ENCODE measurements at regions of chr3 and their contacts with region 1.

Region 1: GRCh38 chr3:64685800-64686445 is 1.9 kb downstream of the ADAMTS9 start:
- DNase-seq: peak; percentile 73 to 97
- H3K4me3 ChIP-seq: peak overlapping the region; percentile 68 to 85
- H3K27ac ChIP-seq: peak overlapping the region; percentile 96 to 97
- H3K4me1 ChIP-seq: peaks cover 0 to 5% of the 10 kb centered on the region in 2 donors
- H3K27me3 ChIP-seq: no peaks in the 10 kb centered on the region
- CTCF ChIP-seq: peak; percentile 24 to 58 (median 35)

Region 2: GRCh38 chr3:64422192-64422591 is 263.7 kb before region 1 on chr3:
- intact Hi-C with region 1: no loop called
- DNase-seq: no peak
- H3K4me3 ChIP-seq: no peak overlapping the region
- H3K27ac ChIP-seq: no peak overlapping the region
- H3K4me1 ChIP-seq: no peaks in the 10 kb centered on the region
- H3K27me3 ChIP-seq: no peaks in the 10 kb centered on the region
- CTCF ChIP-seq: no peak

Region 3: DNA sequence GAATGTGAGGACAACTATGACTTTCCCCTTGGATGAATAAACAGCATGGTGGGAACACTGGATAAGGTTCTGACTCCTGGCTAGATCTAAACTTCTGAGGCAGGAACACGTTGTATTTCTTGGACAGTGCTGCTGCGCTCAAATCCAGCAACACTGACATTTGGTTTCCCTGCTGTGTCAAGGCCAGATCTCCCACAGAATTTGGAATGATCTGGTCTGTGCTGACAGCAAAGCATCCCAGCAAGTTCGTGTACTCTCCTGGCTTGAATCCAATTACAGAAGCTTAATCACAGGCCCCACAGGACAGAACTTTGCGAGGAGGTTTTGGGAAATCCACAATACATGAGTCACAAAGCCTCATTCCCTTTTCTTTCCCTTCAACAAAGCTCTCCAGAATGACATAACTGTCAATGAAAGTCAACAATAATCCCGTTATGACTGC is 90.6 kb before region 1 on chr3:
- intact Hi-C with region 1: loop called (anchors 1 kb)
- DNase-seq: peak in 1 of 2 donors; percentile 68
- H3K4me3 ChIP-seq: no peak overlapping the region
- H3K27ac ChIP-seq: peak overlapping the region in 1 of 2 donors; percentile 51
- H3K4me1 ChIP-seq: no peaks in the 10 kb centered on the region
- H3K27me3 ChIP-seq: no peaks in the 10 kb centered on the region
- CTCF ChIP-seq: no peak

Region 4: GRCh38 chr3:64696896-64697295 is 11.0 kb after region 1 on chr3:
- intact Hi-C with region 1: no loop called
- DNase-seq: no peak
- H3K4me3 ChIP-seq: no peak overlapping the region
- H3K27ac ChIP-seq: no peak overlapping the region
- H3K4me1 ChIP-seq: peaks cover 0 to 4% of the 10 kb centered on the region in 2 donors
- H3K27me3 ChIP-seq: no peaks in the 10 kb centered on the region
- CTCF ChIP-seq: no peak

Region 5: DNA sequence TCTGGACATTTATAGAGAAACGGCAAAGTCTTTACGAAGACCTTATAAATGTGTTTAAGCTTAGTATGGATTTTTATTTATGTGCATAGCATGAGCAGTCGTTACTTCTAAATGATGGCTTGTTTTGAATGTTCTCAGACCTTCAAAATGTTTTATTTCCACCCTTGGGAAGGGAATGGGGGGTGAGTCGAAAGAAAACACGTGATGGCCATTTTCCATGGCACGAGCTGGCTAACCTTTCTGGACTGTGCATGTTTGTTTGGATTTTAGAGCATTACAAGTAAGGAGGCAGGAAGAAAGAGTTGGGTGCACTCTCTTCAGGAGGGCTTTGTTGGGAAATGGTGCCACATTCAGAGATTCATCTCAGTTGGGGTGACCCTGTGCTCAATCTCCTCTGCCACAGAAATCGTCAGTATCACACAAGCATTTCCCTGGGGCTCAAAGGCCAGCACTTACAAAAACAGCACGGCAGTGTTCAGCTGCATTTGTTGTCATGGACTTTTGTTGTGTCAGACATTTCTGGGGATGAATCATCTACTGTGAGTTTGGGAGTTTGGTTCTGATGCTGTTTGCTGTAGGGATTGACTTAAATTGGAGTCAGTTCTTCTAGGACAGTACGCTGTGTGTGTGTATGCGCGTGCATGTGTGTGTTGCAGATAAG is 54.2 kb after region 1 on chr3:
- intact Hi-C with region 1: loop called (anchors 5 kb)
- DNase-seq: peak in 1 of 2 donors; percentile 67
- H3K4me3 ChIP-seq: no peak overlapping the region
- H3K27ac ChIP-seq: peak overlapping the region; percentile 77 to 85
- H3K4me1 ChIP-seq: peaks cover 3 to 24% of the 10 kb centered on the region in 2 donors
- H3K27me3 ChIP-seq: no peaks in the 10 kb centered on the region
- CTCF ChIP-seq: no peak

Region 6: GRCh38 chr3:64890006-64890405 is 204.1 kb after region 1 on chr3:
- intact Hi-C with region 1: loop called (anchors 2 kb)
- DNase-seq: no peak
- H3K4me3 ChIP-seq: no peak overlapping the region
- H3K27ac ChIP-seq: no peak overlapping the region
- H3K4me1 ChIP-seq: peaks cover 4 to 12% of the 10 kb centered on the region in 2 donors
- H3K27me3 ChIP-seq: no peaks in the 10 kb centered on the region
- CTCF ChIP-seq: no peak

Region 7: DNA sequence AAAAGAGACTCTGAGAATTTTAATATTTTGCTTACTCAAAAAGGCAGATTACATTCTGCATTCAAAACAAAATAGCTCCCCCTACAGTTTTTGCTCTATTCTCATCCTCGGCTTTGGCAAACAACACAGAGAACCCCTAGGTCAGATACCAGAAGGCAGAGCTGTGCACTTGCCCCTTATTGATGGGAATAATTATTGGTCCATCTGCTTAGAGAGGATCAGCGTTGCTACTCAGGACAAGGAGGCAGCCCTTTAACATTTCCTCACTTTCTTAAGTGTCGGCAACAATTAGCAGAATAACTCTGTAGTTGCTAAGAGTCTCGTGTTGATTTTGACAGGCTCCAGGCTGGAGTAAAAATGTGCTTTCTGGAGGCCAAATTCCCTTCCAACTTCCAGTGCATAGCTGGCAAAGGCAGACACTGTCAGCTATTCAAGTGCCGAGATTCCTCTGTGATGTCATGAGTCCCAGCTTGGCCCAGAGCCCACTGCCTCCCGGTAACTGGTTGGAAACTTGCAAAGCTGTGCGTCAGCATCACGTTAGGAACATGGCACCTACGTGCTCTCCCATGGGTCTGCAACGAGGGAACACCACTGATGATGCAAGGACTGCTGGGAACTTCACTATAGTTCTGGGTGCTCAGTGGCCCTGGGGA is 484.6 kb after region 1 on chr3:
- intact Hi-C with region 1: loop called (anchors 1 kb)
- DNase-seq: peak; percentile 90 to 98
- H3K4me3 ChIP-seq: peak overlapping the region in 1 of 2 donors; percentile 5
- H3K27ac ChIP-seq: peak overlapping the region; percentile 72 to 78
- H3K4me1 ChIP-seq: peaks cover 0 to 6% of the 10 kb centered on the region in 2 donors
- H3K27me3 ChIP-seq: no peaks in the 10 kb centered on the region
- CTCF ChIP-seq: peak in 2 of 3 experiments; percentile 12 to 49

Measured in ascending aorta (tissue), 2 donors.